HepG2 (cell line): ENCODE measurements at regions of chr1 and their contacts with region 1.

Region 1: DNA sequence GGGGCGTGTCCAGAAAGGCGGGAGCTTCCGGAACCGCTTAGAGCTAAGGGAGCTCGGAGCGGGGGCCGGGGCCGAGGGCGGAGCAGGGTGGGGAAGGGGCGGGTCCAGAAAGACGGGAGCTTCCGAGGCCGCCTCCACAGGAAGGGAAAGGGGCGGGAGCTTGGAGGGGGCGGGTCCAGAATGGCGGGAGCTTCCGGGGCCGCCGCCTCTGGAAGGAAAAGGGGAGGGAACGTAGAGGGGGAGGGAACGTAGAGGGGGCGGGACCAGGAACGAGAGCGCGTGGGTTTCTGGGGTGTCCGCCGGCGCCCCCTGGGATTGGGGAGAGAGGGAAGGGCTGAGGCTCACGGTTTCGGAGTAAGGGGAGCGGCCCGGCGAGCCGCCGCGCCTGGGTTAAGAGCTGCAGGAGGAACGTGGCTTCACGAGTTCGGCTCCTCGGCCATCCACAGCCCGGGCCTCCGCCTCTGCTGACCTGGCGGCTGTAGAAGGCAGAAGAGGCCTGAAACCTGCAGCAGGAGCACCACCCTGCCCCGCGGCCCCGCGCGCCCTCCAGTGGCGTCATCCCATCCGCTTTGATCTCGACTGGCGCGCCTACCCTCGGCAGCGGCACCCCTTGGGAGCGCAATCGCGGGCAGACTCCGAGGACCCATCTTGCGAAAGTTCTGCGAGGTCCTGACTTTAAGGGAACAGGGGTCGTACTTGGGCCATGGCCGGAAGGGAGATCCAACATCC is 22.9 kb upstream of the HPDL start:
- DNase-seq: peak; percentile 92
- ATAC-seq: peak; percentile 87
- H3K4me3 ChIP-seq: peak overlapping the region; percentile 73 to 77 (median 75)
- H3K27ac ChIP-seq: peak overlapping the region; percentile 90
- H3K4me1 ChIP-seq: peaks cover 54% of the 10 kb centered on the region
- H3K27me3 ChIP-seq: no peaks in the 10 kb centered on the region
- CTCF ChIP-seq: peak; percentile 98
- EP300 ChIP-seq: peak in 1 of 2 experiments; percentile 1; a peak in 1 of 4 replicates
- POLR2A ChIP-seq: peak; percentile 81 to 94
- RAD21 ChIP-seq: peak; percentile 97

Region 2: DNA sequence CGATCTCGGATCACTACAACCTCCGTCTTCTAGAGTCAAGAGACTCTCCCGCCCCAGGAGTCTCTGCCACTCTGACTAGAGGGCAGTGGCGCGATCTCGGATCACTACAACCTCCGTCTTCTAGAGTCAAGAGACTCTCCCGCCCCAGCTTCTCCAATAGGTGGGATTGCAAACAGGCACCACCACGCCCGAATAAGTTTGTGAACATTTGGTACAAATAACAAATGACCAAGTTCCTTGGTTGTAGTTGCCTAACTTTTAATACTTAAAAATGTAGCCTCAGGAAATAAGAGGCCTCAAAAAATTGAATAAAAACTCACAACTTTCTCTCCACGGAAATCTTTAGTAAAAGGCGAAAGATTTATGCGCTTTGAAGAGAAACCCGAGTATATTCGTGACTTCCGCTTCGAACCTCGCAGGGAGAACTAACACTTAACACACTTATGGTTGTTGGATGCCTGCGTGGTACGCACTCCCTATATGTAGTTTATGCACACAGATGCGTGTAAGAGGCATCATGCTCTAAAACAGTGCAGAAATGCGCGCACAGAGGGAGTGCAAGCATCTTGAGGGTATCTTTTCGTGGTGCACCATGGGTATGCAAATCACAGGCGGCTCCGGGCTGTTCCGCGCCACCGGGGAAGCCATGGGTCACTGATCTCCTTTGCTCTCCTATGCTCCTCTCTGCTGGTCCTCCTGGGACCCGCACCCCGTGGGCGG is 484.0 kb before region 1 on chr1:
- CTCF ChIA-PET with region 1: no interaction called
- POLR2A ChIA-PET with region 1: interaction called, 8 read pairs
- in situ Hi-C with region 1: no loop called
- intact Hi-C with region 1: loop called (anchors 10 kb)
- DNase-seq: peak; percentile 90
- ATAC-seq: peak; percentile 89
- H3K4me3 ChIP-seq: peak overlapping the region; percentile 57 to 80 (median 64)
- H3K27ac ChIP-seq: peak overlapping the region; percentile 100
- H3K4me1 ChIP-seq: peaks cover 30% of the 10 kb centered on the region
- H3K27me3 ChIP-seq: no peaks in the 10 kb centered on the region
- CTCF ChIP-seq: peak; percentile 36; the same call in 1 of the 2 replicates
- EP300 ChIP-seq: peak; percentile 64 to 75; a peak in 2 of 4 replicates
- POLR2A ChIP-seq: peak in 1 of 2 experiments; percentile 100; a peak in 2 of 4 replicates
- RAD21 ChIP-seq: peak; percentile 38

Region 3: DNA sequence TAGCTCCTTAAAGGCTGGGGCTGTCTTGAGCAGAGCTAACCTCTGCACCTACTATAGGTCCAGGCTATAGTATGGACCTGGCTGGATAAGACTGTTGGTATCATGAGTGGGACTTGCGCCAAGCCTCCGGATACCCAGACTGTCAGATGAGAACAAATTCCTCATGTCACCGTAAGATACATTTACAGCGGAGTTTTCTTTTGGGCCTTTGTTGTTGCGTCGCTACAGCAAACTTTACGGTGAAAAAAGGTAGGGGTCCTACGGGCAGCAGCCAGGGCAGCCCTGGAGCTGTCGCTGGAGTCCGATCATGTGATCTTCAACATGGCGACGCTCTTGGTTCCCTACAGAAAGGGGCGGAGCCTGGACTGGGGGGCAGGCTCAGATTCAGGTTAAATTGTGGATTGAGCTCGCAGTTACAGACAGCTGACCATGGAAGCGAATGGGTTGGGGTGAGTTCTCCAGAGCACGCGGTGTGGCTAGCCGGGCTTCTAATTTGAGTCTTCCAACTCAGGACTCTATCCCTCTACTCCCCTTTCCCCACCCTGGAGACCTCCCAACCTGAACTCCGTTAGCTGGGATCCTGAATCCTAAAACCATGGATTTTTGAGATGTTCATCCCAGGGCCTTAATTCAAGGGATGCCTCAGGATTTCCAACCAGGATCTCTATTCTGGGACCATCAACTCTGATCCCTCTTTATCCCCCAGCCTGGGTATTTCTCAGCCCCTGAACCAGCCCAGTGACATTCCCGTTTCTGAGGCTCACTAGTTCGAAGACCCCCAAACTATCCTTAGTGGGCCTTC is 291.7 kb before region 1 on chr1 and contains the start of gene UROD:
- CTCF ChIA-PET with region 1: interaction called, 24 read pairs
- POLR2A ChIA-PET with region 1: interaction called, 231 read pairs
- in situ Hi-C with region 1: loop called (anchors 5 kb)
- intact Hi-C with region 1: loop called (anchors 1 kb)
- DNase-seq: peak; percentile 94
- ATAC-seq: peak; percentile 75
- H3K4me3 ChIP-seq: peak within 1 kb of the TSS; percentile 73 to 95 (median 78)
- H3K27ac ChIP-seq: peak within 1 kb of the TSS; percentile 85
- H3K4me1 ChIP-seq: peaks cover 32% of the 10 kb centered on the region
- H3K27me3 ChIP-seq: no peaks in the 10 kb centered on the region; a peak in 1 of 5 replicates
- CTCF ChIP-seq: peak; percentile 4; the same call in 1 of the 2 replicates
- EP300 ChIP-seq: 0 out of 4 replicates have a peak, but pooled peaks of 1 of the 2 experiments have one; percentile 12
- POLR2A ChIP-seq: peak; percentile 91 to 96
- RAD21 ChIP-seq: no peak
- total RNA-seq, gene UROD: 171 and 243 TPM in 2 replicates

Region 4: GRCh38 chr1:45230540-45230939 is 73.2 kb before region 1 on chr1:
- CTCF ChIA-PET with region 1: no interaction called
- POLR2A ChIA-PET with region 1: no interaction called
- in situ Hi-C with region 1: no loop called
- intact Hi-C with region 1: loop called (anchors 2 kb)
- DNase-seq: peak; percentile 34
- ATAC-seq: peak; percentile 89
- H3K4me3 ChIP-seq: no peak overlapping the region
- H3K27ac ChIP-seq: no peak overlapping the region
- H3K4me1 ChIP-seq: no peaks in the 10 kb centered on the region
- H3K27me3 ChIP-seq: peaks cover 1 to 6% of the 10 kb centered on the region in 2 experiments; a peak in 1 of 5 replicates
- CTCF ChIP-seq: peak; percentile 79
- EP300 ChIP-seq: no peak
- POLR2A ChIP-seq: no peak
- RAD21 ChIP-seq: peak; percentile 63

Region 5: DNA sequence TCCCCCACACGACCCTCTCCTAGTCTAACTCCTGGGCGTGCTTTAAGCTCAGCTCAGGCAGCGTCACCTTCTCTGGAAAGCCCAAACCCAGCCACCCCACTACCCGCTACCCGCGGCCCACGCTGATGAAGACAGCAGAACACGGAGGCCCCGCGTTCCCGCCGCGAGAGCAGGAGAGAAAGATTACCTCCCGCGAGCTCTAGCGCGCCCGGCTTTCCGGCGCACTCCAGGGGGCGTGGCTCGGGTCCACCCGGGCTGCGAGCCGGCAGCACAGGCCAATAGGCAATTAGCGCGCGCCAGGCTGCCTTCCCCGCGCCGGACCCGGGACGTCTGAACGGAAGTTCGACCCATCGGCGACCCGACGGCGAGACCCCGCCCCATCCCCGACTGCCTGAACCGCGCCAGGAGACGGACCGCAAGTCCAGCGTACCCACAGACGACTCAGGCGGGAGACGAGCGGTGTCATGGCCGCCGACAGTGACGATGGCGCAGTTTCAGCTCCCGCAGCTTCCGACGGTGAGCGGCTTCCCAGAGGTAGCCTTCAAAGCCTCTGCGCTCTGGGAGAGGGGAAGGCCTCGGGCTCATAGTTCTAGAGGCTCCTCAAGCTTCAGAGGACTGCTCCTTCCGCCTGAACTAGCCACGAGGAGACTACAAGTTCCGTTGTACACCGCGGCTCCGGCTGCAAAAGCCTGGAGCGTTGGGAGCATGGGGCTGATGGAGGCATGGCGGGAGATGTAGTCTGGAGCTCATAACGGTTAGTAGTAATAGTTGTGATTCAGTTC is 36.2 kb after region 1 on chr1 and contains the starts of genes MUTYH and TOE1:
- CTCF ChIA-PET with region 1: no interaction called
- POLR2A ChIA-PET with region 1: interaction called, 159 read pairs
- in situ Hi-C with region 1: no loop called
- intact Hi-C with region 1: loop called (anchors 1 kb)
- DNase-seq: peak; percentile 87
- ATAC-seq: peak; percentile 86
- H3K4me3 ChIP-seq: peak within 1 kb of the TSS; percentile 68 to 83 (median 80)
- H3K27ac ChIP-seq: peak within 1 kb of the TSS; percentile 91
- H3K4me1 ChIP-seq: peaks cover 59% of the 10 kb centered on the region
- H3K27me3 ChIP-seq: no peaks in the 10 kb centered on the region; a peak in 1 of 5 replicates
- CTCF ChIP-seq: peak; percentile 24; the same call in 1 of the 2 replicates
- EP300 ChIP-seq: no peak
- POLR2A ChIP-seq: peak; percentile 87 to 90
- RAD21 ChIP-seq: peak; percentile 56
- total RNA-seq, gene MUTYH: 12.7 and 17.1 TPM in 2 replicates
- total RNA-seq, gene TOE1: 17.4 and 19.0 TPM in 2 replicates

Region 6: DNA sequence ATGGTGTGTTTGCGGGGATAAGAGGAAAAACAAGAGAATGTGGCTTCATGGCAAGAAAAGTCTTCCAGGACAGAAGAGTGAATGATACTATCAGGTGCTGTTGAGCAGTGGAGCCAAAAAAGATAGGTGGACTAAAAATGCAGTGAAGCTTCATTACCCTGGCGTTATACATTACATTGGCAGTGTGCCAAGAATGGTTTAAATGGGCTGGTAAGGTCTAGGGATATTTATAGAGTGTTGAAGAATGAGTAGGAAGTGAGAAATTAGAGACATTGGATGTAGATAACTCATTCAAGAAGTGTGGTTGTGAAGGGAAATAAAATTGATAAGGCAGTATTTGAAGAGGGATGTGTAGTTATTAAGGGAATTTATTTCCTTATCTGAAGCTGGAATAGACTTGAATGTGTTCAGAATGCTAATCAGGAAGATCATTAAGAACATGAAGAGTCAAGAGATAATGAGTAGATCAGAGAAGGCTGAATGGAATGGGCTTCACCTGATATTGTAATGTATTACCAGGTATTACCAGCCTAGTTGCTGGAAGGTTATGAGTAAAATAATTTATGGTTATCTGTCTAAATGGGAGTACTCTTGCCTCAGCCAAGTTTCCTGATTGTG is 572.4 kb after region 1 on chr1:
- CTCF ChIA-PET with region 1: no interaction called
- POLR2A ChIA-PET with region 1: no interaction called
- in situ Hi-C with region 1: no loop called
- intact Hi-C with region 1: no loop called
- DNase-seq: no peak
- ATAC-seq: no peak
- H3K4me3 ChIP-seq: no peak overlapping the region
- H3K27ac ChIP-seq: no peak overlapping the region
- H3K4me1 ChIP-seq: peaks cover 57% of the 10 kb centered on the region
- H3K27me3 ChIP-seq: no peaks in the 10 kb centered on the region
- CTCF ChIP-seq: no peak
- EP300 ChIP-seq: no peak
- POLR2A ChIP-seq: no peak
- RAD21 ChIP-seq: no peak